ENCODE measurements at regions of chr3 and their contacts with region 1.

Region 1: GRCh38 chr3:194573691-194574437 is 59.4 kb downstream of the TMEM44 start:
- DNase-seq: no peak
- ATAC-seq: peak; percentile 58
- H3K4me3 ChIP-seq: no peak overlapping the region
- H3K27ac ChIP-seq: peak overlapping the region in 1 of 2 donors; percentile 21
- H3K4me1 ChIP-seq: no peaks in the 10 kb centered on the region
- H3K27me3 ChIP-seq: no peaks in the 10 kb centered on the region

Region 2: GRCh38 chr3:194472290-194472920 is 101.5 kb before region 1 on chr3:
- intact Hi-C with region 1: loop called in 1 of 2 experiments (anchors 5 kb)
- DNase-seq: no peak
- ATAC-seq: peak; percentile 82
- H3K4me3 ChIP-seq: no peak overlapping the region
- H3K27ac ChIP-seq: no peak overlapping the region
- H3K4me1 ChIP-seq: peaks cover 0 to 2% of the 10 kb centered on the region in 2 donors
- H3K27me3 ChIP-seq: no peaks in the 10 kb centered on the region

Region 3: DNA sequence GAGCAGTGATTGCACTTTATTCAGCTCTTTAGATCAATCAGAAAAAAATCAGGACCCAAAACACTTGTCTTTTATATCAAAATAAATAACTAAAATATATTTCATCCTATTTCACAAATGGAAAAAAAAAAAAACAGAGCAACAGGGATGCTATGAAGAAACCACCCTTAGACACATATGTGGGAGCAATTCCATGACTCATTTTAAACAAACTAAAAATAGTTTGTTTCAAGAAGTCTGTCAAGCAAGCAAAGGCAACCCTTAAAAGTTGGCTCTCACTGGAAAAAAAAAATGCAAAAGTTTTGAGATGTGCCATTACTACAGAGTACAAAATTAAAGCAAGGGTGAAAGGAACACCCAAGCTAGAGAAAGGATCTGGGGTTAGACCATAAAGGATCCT is 92.8 kb before region 1 on chr3:
- intact Hi-C with region 1: loop called (anchors 5 kb)
- DNase-seq: no peak
- ATAC-seq: no peak
- H3K4me3 ChIP-seq: no peak overlapping the region
- H3K27ac ChIP-seq: no peak overlapping the region
- H3K4me1 ChIP-seq: peaks cover 2 to 3% of the 10 kb centered on the region in 2 donors
- H3K27me3 ChIP-seq: no peaks in the 10 kb centered on the region

Region 4: DNA sequence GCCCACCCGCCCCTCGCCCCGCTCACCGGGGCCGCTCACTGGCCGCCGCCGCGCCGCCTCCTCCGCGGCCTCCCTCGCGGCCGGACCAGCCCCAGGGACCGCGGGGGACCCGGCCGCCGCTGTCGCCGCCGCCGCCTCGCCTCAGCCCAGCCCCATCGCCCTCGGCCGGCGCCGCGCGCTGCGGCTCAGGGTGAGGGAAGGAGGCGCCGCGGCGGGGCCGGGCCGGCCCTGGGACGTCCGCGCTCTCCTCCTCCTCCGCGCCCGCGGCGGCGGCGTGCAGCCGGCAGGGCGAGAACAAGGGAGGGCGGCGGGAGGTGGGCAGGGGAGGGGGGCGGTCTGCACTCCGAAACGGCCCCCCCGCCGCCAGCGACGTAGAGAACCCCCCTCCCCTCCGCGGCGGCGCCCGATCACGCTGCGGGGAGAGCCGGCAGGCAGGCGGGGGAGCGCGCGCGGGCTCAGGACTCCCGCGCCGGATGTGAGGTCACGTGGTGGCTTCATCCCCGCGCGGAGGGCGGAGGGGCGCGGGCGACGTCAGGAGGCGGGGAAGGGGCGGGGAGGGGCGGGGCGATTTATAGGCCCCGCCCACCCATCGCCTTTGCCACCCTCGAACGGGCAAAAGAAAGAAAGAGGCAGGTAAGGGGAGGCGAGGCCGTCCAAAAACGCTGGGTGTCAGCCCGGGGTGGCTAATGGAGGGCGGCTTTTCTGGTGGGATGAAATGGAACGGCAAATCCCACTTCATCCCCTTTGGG is 87.2 kb before region 1 on chr3 and contains the start of gene ATP13A3:
- intact Hi-C with region 1: loop called (anchors 5 kb)
- DNase-seq: peak; percentile 94 to 96
- ATAC-seq: peak; percentile 93
- H3K4me3 ChIP-seq: peak within 1 kb of the TSS; percentile 89 to 95
- H3K27ac ChIP-seq: peak within 1 kb of the TSS; percentile 80 to 96
- H3K4me1 ChIP-seq: no peaks in the 10 kb centered on the region
- H3K27me3 ChIP-seq: no peaks in the 10 kb centered on the region
- total RNA-seq, gene ATP13A3: 127 to 189 TPM

Region 5: DNA sequence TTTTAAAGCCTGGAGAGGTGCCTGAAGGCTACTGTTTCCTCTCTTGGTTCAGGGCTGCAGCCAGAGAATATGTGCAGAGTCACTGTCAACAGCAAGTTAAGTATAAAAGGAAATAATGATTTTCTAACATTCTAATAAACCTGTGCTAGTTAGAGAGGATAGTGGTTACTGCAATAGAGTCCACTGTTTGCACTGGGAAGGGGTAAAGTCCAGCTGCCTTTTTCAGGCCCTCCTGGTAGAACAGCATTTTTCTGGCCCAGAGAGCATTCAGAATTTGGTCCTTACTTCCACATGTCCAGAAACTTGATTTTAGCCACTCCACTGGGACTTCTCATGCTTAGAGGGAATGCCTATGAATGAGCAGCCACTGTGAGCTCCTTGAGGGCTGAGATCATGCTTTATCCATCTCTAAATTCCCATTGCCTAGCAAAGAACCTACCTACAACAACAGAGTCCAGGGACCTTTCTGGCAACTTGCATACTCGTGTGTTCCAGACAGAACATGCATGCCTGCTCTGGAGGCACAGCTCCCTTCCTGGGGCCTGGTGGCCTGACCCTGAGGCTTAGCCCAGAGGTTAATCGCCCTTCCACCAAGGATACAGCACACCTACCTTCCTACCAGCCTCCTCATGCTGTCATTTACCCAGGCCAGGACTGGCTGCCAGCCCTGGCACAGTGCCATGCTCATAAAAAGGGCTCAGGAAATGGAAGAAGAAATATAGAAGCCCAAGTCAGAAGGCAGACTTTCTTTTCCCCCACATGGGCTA is 36.8 kb before region 1 on chr3:
- intact Hi-C with region 1: loop called in 1 of 2 experiments (anchors 5 kb)
- DNase-seq: peak; percentile 66 to 78
- ATAC-seq: peak; percentile 53
- H3K4me3 ChIP-seq: no peak overlapping the region
- H3K27ac ChIP-seq: peak overlapping the region; percentile 31 to 73
- H3K4me1 ChIP-seq: peaks cover 0 to 3% of the 10 kb centered on the region in 2 donors
- H3K27me3 ChIP-seq: no peaks in the 10 kb centered on the region

Measured in aorta (tissue), 5 donors.